AG04449 (cell line): ENCODE measurements at regions of chr17 and their contacts with region 1.

Region 1: DNA sequence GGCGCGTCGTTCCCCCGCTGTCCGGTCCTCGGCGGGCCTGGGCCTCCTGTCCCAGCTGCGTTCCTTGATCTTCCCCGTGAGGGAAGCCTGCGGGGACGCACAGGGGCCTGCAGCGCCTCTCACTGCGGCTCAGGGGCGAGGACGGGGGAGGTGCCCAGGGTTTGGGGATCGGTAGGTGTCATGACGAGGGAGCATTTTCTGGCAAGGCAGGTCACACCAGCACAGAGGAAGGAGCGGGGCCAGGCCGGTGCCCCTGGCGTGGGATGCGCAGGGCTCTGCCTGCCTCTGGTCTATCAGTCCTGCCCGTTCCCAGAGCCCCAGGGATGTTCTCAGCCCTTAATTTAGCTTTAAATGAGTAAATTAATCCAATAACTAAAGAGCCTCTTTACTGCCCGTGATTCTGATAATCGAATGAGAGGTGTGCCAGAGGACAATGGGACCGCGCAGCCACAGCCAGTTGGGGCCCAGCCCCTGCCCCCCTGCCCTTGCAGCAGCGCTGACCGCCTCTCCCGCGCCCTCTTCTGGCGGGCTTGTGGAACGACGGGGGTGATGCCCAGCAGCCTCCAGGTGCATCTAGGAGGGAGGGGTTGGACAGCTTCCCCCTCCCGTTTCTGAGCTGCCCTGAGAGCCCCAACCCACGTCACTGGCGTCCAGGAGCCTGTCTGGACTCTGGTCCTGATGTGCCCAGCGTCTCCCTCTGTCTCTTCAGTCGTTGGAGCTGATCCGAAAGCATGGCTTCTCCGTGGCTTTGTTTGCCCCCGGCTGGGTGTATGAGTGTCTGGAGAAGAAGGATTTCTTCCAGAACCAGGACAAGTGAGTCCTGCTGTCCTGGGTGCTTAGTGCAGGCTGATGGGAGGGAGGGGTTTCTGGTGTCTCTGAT is 7.9 kb downstream of the ENGASE start:
- DNase-seq: no peak
- H3K4me3 ChIP-seq: no peak overlapping the region
- CTCF ChIP-seq: peak; percentile 94

Region 2: GRCh38 chr17:78970834-78971773 is 111.4 kb before region 1 on chr17:
- CTCF ChIA-PET with region 1: no interaction called
- POLR2A ChIA-PET with region 1: no interaction called
- DNase-seq: no peak
- H3K4me3 ChIP-seq: no peak overlapping the region; the same call in 1 of the 2 replicates
- CTCF ChIP-seq: peak; percentile 83

Region 3: GRCh38 chr17:79036596-79036995 is 46.0 kb before region 1 on chr17:
- CTCF ChIA-PET with region 1: interaction called, 15 read pairs
- POLR2A ChIA-PET with region 1: no interaction called
- DNase-seq: peak; percentile 84
- H3K4me3 ChIP-seq: no peak overlapping the region
- CTCF ChIP-seq: no peak

Region 4: DNA sequence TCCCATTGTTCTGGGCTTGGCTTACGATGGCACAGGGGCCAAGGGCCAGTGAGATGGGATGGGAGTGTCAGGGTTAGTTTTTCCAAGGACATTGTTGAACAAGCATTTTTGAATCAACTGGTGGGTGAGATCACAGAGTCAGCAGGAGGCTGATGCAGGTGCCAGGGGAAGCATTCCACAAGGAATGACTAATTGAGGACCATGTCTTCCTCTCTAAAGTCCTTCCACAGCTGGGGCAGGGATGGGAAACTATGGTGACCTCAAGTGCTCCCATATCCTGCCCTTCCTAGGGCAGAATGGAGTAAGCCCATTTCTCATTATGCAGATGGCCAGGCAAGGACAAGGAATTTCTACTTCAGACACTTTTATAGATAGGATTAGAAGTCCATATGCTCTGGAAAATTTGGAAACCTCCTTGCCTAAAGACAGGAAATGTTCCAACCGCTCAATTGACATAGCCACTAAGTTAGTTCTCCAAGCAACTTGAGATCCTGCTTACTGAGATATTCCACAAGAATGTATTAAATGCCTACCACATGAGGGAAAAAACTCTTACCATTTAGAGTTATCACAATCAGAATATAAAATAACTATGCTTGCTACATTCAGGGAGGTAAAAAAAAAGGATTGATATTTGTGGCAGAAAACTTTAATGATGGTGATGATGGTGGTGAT is 29.2 kb before region 1 on chr17:
- CTCF ChIA-PET with region 1: interaction called, 80 read pairs
- POLR2A ChIA-PET with region 1: no interaction called
- DNase-seq: no peak
- H3K4me3 ChIP-seq: no peak overlapping the region
- CTCF ChIP-seq: no peak

Region 5: GRCh38 chr17:79065105-79065670 is 17.4 kb before region 1 on chr17:
- CTCF ChIA-PET with region 1: interaction called, 54 read pairs
- POLR2A ChIA-PET with region 1: no interaction called
- DNase-seq: no peak
- H3K4me3 ChIP-seq: no peak overlapping the region
- CTCF ChIP-seq: peak; percentile 40

Region 6: DNA sequence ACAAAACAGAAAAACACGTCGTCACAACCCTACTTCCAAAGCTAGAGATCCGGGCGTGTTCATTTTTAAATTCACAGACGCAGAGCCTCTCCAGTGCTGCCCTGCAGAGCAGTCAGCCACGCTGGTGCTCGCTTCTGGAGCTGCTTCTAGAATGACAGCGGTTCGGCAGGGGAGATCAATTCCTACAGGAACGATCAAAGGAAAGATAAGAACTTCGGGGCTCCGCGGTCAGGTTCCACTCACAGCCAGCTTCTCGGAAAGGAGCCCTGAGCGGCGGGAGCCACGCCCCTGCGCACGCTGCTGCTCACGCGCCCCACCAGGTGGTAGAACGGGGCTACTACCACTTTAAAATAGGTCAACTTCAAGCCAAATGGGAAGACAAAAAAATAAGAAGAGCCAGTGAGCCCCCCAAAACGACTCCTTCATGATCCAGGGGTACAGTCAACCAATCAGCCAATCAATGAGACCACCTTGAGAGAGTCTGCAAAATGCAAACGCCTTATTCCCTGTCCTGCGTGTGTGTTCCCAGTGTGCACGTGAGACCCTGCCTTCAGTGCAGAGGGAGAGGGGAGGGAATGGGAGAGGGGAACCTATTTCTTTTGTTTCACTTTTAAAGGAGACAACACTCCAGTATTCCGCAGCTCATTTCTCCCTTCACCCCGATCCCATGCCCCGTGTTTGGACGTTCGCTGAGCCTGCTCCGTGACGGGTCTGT is 318.6 kb after region 1 on chr17:
- CTCF ChIA-PET with region 1: interaction called, 473 read pairs
- POLR2A ChIA-PET with region 1: no interaction called
- DNase-seq: no peak
- H3K4me3 ChIP-seq: peak overlapping the region; percentile 42
- CTCF ChIP-seq: peak; percentile 90